ENCODE measurements at regions of chr12 and their contacts with region 1.

Region 1: GRCh38 chr12:50537538-50537919 is 32.7 kb downstream of the DIP2B start:
- DNase-seq: no peak
- ATAC-seq: peak; percentile 41; the same call in 1 of the 3 replicates
- H3K4me3 ChIP-seq: no peak overlapping the region
- H3K27ac ChIP-seq: peak overlapping the region; percentile 39
- H3K4me1 ChIP-seq: peaks cover 75% of the 10 kb centered on the region
- H3K27me3 ChIP-seq: no peaks in the 10 kb centered on the region
- CTCF ChIP-seq: no peak
- EP300 ChIP-seq: no peak
- POLR2A ChIP-seq: no peak
- RAD21 ChIP-seq: no peak

Region 2: DNA sequence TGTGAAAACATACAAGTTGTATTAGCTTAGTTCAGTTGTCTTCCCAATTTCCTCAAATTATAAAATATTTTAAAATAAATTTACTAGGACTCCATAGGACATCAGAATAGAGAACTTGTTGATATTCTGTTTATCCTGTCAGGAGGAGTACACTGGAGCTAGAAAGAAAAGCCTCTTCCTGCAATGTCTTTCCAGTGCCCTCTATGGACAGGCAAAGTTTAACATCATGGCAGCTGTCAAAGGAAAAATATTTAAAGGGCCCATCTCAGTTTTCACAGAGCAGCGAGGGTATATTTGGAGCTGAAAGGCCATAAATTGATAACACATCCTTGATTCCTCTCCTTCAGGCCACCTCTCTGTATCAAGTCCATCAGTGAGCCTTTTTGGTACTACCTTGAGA is 13.8 kb before region 1 on chr12:
- CTCF ChIA-PET with region 1: no interaction called
- POLR2A ChIA-PET with region 1: interaction called, 14 read pairs
- in situ Hi-C with region 1: no loop called
- intact Hi-C with region 1: no loop called
- DNase-seq: no peak
- ATAC-seq: no peak
- H3K4me3 ChIP-seq: no peak overlapping the region
- H3K27ac ChIP-seq: peak overlapping the region; percentile 99
- H3K4me1 ChIP-seq: peaks cover 88% of the 10 kb centered on the region
- H3K27me3 ChIP-seq: no peaks in the 10 kb centered on the region
- CTCF ChIP-seq: no peak
- EP300 ChIP-seq: no peak
- POLR2A ChIP-seq: no peak
- RAD21 ChIP-seq: no peak

Measured in HepG2 (cell line).